ENCODE measurements at regions of chr1 and their contacts with region 1.

Region 1: GRCh38 chr1:150072959-150073358 is 5.4 kb downstream of the VPS45 start:
- DNase-seq: peak in 1 of 35 experiments; percentile 47
- ATAC-seq: peak; percentile 47 to 85 (median 72)
- H3K4me3 ChIP-seq: no peak overlapping the region
- H3K4me3 Mint-ChIP-seq: no peak overlapping the region
- H3K27ac ChIP-seq: no peak overlapping the region
- H3K27ac Mint-ChIP-seq: no peak overlapping the region
- H3K4me1 ChIP-seq: peaks cover 0 to 2% of the 10 kb centered on the region in 2 experiments
- H3K4me1 Mint-ChIP-seq: peaks cover 31 to 42% (median 34%) of the 10 kb centered on the region in 3 donors
- H3K27me3 ChIP-seq: no peaks in the 10 kb centered on the region
- H3K27me3 Mint-ChIP-seq: no peaks in the 10 kb centered on the region

Region 2: DNA sequence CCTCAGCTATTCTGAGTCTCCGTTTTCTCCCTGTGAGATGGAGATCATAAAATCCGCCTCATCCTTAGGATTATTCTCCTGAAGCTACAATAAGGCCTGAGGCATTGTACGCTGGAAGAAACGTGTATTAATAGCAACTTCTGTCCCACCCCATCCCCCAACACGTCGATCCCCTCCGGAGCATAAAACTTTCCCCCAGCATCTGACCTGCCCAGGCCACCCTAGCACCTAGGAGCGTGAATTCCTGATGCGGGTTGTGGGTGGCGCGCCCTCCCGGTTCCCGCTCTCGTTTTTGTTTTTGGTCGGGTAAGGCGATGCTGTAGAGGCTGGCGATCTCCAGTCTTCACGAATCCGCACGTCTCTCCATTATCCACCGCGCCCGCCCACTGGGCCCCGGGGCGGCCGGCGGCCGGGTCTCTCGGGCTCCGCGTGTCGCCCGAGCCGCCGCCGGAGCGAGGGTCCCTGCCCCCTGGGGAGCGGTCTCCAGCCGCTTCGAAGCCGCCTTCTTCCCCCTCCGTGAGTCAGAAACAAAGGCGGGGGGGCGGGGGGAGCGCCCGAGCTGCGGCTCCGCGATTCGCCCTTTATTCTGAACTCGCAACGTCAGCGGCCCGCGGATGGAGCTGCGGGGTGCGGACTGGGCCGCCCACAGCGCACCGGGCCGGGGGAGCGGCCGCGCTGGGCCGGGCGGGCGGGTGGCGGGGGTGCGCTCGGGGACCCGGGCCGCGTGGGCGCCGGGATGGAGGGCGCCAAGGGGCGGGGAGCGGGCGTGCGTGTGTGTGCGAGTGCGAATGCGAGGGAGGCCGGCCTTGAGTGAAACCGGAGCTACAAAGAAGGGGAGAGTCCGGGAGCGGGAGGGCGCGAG is 76.5 kb after region 1 on chr1 and contains the start of gene PLEKHO1:
- CTCF ChIA-PET with region 1: interaction called in 1 of 2 experiments, 13 read pairs
- POLR2A ChIA-PET with region 1: interaction called in 1 of 2 experiments, 15 read pairs
- DNase-seq: peak; percentile 59 to 88 (median 74)
- ATAC-seq: peak; percentile 73 to 76 (median 75)
- H3K4me3 ChIP-seq: peak within 1 kb of the TSS; percentile 87 to 93
- H3K4me3 Mint-ChIP-seq: peak within 1 kb of the TSS; percentile 91 to 98 (median 95)
- H3K27ac ChIP-seq: peak within 1 kb of the TSS; percentile 88
- H3K27ac Mint-ChIP-seq: peak within 1 kb of the TSS; percentile 98 to 99
- H3K4me1 ChIP-seq: peaks cover 17 to 51% of the 10 kb centered on the region in 2 experiments
- H3K4me1 Mint-ChIP-seq: peaks cover 70 to 74% (median 71%) of the 10 kb centered on the region in 3 donors
- H3K27me3 ChIP-seq: no peaks in the 10 kb centered on the region
- H3K27me3 Mint-ChIP-seq: no peaks in the 10 kb centered on the region
- total RNA-seq, gene PLEKHO1: 68.9 to 183 (median 154) TPM

Region 3: DNA sequence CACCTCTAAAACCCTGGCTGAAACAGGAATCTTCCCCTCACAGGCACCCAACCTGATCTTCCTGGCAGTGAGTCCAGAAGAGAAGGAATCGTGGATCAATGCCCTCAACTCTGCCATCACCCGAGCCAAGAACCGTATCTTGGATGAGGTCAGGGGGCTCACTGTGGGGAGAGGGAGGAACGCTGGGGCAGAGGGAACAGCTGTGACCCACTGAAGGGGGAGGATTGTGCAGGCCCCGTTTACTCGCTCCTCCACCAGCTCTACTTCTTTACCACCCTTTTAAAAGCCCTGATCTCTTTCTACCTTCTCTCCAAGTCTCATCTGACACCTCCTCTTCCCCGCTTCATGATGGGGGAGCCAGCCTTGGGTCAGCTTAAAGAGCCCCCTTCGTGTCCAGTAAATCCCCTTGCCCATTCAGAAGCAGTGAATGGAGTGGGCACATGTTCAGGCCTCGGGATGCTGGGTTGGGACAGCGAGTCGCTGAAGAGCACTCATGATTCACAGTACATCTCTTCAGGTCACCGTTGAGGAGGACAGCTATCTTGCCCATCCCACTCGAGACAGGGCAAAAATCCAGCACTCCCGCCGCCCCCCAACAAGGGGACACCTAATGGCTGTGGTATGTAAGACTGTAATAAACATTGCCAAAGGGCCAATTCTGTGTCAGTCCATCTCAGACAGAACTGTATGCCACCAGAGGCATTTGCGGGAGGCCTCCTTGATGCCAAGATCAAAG is 84.1 kb after region 1 on chr1:
- CTCF ChIA-PET with region 1: interaction called, 17 to 23 read pairs
- POLR2A ChIA-PET with region 1: interaction called, 3 read pairs
- DNase-seq: no peak
- ATAC-seq: no peak
- H3K4me3 ChIP-seq: no peak overlapping the region
- H3K4me3 Mint-ChIP-seq: no peak overlapping the region
- H3K27ac ChIP-seq: no peak overlapping the region
- H3K27ac Mint-ChIP-seq: peak overlapping the region; percentile 61 to 88
- H3K4me1 ChIP-seq: peaks cover 24 to 65% of the 10 kb centered on the region in 2 experiments
- H3K4me1 Mint-ChIP-seq: peaks cover 82 to 95% (median 93%) of the 10 kb centered on the region in 3 donors
- H3K27me3 ChIP-seq: no peaks in the 10 kb centered on the region
- H3K27me3 Mint-ChIP-seq: no peaks in the 10 kb centered on the region

Region 4: DNA sequence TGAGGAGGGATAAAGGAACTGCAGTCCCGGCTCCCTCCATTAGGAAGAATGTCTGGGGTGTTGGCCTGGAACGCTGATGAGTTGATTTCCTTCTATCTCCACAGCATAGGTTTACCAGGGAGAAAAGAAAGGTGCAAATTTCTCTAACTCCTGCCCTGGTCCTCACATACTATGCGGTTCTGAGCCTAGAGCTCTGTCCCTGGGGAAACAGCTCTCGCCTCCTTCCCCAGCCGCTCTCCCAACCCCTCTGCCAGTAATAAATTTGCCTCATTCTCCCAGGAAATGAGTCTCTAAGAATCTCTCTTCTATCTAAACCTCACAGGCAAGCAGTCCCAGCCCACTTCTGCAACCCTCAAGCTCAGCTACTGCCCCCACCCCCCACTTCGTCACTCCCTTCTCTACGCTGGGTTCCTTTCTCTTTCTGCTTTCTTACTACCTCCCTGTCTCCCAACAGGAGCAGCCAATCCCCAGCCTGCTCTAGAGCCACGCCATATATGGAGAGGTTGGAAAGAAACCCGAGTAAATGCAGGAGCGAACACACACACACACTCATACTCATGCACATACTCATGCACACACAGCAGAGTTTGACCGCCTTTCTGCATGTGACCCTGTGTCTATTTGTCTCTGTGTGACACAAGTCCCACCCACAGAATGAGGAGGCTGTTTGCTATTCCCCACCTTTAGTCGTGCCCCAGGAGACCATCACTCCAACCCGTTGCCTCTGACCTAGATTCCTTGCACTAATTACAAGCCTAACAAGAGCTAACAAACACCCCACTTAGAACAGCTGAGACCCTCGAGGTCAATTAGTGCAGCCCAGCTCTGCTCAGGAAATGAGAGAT is 90.1 kb after region 1 on chr1:
- CTCF ChIA-PET with region 1: interaction called, 18 to 40 read pairs
- POLR2A ChIA-PET with region 1: interaction called in 1 of 2 experiments, 4 read pairs
- DNase-seq: peak in 2 of 35 experiments; percentile 18 to 49
- ATAC-seq: peak; percentile 10 to 56 (median 22)
- H3K4me3 ChIP-seq: peak overlapping the region in 1 of 2 donors; percentile 35
- H3K4me3 Mint-ChIP-seq: peak overlapping the region in 2 of 3 donors; percentile 7 to 62
- H3K27ac ChIP-seq: peak overlapping the region; percentile 13
- H3K27ac Mint-ChIP-seq: peak overlapping the region; percentile 16 to 53
- H3K4me1 ChIP-seq: peaks cover 27 to 45% of the 10 kb centered on the region in 2 experiments
- H3K4me1 Mint-ChIP-seq: peaks cover 54 to 74% (median 57%) of the 10 kb centered on the region in 3 donors
- H3K27me3 ChIP-seq: no peaks in the 10 kb centered on the region
- H3K27me3 Mint-ChIP-seq: no peaks in the 10 kb centered on the region

Region 5: DNA sequence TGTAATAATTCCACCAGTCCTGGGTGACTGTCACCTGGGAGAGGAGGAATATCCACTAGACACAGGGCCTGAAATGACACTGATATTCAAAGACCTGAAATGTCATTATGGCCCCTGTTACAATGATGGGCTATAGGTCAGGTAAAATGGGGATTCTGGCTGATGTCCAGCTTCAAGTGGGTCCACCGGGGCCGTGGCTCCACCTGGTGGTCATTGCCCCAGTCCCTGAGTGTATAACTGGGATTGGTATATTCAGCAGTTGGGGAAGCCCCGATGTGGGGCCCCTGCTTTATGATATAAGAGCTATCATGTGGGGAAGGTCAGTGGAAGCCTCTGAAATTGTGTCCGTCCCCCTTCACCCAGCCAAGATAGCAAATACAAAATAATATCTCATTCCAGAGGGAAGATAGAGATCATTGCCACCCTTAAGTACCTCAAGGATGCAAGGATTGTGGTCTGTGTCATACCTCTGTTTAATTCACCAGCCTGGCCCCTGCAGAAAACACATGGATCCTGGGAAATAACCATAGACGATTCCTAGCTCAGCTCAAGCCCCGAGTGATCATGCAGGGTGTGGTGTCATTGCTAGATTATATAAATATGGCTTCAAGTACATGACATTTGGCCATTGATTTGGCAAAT is 96.1 kb after region 1 on chr1:
- CTCF ChIA-PET with region 1: interaction called, 18 to 40 read pairs
- POLR2A ChIA-PET with region 1: interaction called in 1 of 2 experiments, 4 read pairs
- DNase-seq: peak in 22 of 35 experiments; percentile 19 to 67 (median 40)
- ATAC-seq: peak in 3 of 4 experiments; percentile 43 to 61 (median 46)
- H3K4me3 ChIP-seq: no peak overlapping the region
- H3K4me3 Mint-ChIP-seq: no peak overlapping the region
- H3K27ac ChIP-seq: no peak overlapping the region
- H3K27ac Mint-ChIP-seq: no peak overlapping the region
- H3K4me1 ChIP-seq: no peaks in the 10 kb centered on the region
- H3K4me1 Mint-ChIP-seq: peaks cover 4 to 20% (median 14%) of the 10 kb centered on the region in 3 donors
- H3K27me3 ChIP-seq: peaks cover 0 to 3% of the 10 kb centered on the region in 2 experiments
- H3K27me3 Mint-ChIP-seq: peaks cover 1 to 4% of the 10 kb centered on the region in 2 donors

Region 6: GRCh38 chr1:150186789-150187559 is 114.0 kb after region 1 on chr1:
- CTCF ChIA-PET with region 1: interaction called, 22 to 56 read pairs
- POLR2A ChIA-PET with region 1: interaction called, 4 to 8 read pairs
- DNase-seq: peak in 17 of 35 experiments; percentile 1 to 72 (median 13)
- ATAC-seq: peak; percentile 75 to 88 (median 77)
- H3K4me3 ChIP-seq: no peak overlapping the region
- H3K4me3 Mint-ChIP-seq: peak overlapping the region in 1 of 3 donors; percentile 17
- H3K27ac ChIP-seq: no peak overlapping the region
- H3K27ac Mint-ChIP-seq: peak overlapping the region in 1 of 2 donors; percentile 23
- H3K4me1 ChIP-seq: peaks cover 2 to 13% of the 10 kb centered on the region in 2 experiments
- H3K4me1 Mint-ChIP-seq: peaks cover 0 to 11% (median 9%) of the 10 kb centered on the region in 3 donors
- H3K27me3 ChIP-seq: peaks cover 0 to 3% of the 10 kb centered on the region in 2 experiments
- H3K27me3 Mint-ChIP-seq: peaks cover 0 to 3% of the 10 kb centered on the region in 2 donors

Region 7: GRCh38 chr1:150281837-150282653 is 209.1 kb after region 1 on chr1 and contains the start of gene CIART:
- CTCF ChIA-PET with region 1: interaction called in 1 of 2 experiments, 12 read pairs
- POLR2A ChIA-PET with region 1: no interaction called
- DNase-seq: peak; percentile 54 to 89 (median 73)
- ATAC-seq: peak; percentile 89 to 94 (median 90)
- H3K4me3 ChIP-seq: peak within 1 kb of the TSS; percentile 33 to 48
- H3K4me3 Mint-ChIP-seq: peak within 1 kb of the TSS; percentile 81 to 90 (median 84)
- H3K27ac ChIP-seq: peak within 1 kb of the TSS; percentile 75
- H3K27ac Mint-ChIP-seq: peak within 1 kb of the TSS; percentile 78 to 86
- H3K4me1 ChIP-seq: peaks cover 8 to 19% of the 10 kb centered on the region in 2 experiments
- H3K4me1 Mint-ChIP-seq: peaks cover 26 to 42% (median 28%) of the 10 kb centered on the region in 3 donors
- H3K27me3 ChIP-seq: peaks cover 0 to 4% of the 10 kb centered on the region in 2 experiments
- H3K27me3 Mint-ChIP-seq: no peaks in the 10 kb centered on the region
- total RNA-seq, gene CIART: 0.63 to 2.9 (median 1.3) TPM

Region 8: DNA sequence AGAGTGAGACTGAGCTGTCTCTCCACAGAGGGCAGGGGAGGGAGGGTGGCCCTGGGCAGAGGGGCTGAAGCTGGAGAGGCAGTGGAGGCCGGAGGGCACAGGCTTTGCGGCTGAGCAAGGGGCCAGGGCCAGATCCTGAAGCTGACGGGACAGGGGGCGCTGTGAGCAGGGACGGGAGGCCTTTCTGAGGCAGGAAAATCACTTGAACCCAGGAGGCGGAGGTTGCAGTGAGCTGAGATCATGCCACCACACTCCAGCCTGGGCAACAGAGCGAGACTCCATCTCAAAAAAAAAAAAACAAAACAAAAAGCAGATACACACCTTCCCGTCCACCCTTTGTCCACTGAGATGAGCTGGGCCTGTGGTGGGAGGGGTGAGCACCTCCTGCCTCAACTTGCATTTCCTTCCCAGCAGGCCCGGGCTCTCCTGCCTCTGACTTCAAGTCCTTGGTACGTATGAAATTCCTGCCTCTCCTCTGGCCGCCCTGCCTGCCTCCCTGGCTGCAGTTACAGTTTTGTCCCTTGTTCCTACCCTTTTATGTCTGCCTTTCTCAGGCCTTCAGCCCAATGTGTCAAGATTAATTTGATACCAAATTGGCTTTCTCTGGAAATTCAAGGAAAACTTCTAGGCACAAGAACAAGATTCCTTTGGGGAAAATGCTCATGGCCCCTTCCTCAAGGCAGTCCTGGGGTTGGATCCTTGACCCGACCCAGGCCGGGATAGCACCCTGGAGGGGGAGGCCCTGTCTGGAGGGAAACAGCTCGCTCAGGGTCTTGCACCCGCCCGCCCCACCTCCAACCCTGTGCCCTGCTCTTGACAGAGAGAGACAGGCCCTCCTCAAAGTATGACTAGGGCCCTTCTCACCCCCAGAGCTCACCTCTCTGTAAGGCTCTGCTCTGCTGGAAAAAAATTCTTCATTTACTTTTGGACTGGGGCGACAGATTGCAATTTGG is 465.0 kb after region 1 on chr1:
- CTCF ChIA-PET with region 1: no interaction called
- POLR2A ChIA-PET with region 1: no interaction called
- DNase-seq: no peak
- ATAC-seq: no peak
- H3K4me3 ChIP-seq: no peak overlapping the region
- H3K4me3 Mint-ChIP-seq: no peak overlapping the region
- H3K27ac ChIP-seq: no peak overlapping the region
- H3K27ac Mint-ChIP-seq: no peak overlapping the region
- H3K4me1 ChIP-seq: no peaks in the 10 kb centered on the region
- H3K4me1 Mint-ChIP-seq: no peaks in the 10 kb centered on the region
- H3K27me3 ChIP-seq: peaks cover 0 to 13% of the 10 kb centered on the region in 2 experiments
- H3K27me3 Mint-ChIP-seq: peaks cover 0 to 6% of the 10 kb centered on the region in 2 donors

Measured in T-cell (primary cell).